ENCODE measurements at regions of chr3 and their contacts with region 1.

Region 1: GRCh38 chr3:9731206-9732079 is at the start of gene BRPF1:
- DNase-seq: peak; percentile 100
- ATAC-seq: peak; percentile 97
- H3K4me3 Mint-ChIP-seq: peak within 1 kb of the TSS; percentile 97
- H3K27ac Mint-ChIP-seq: peak within 1 kb of the TSS; percentile 96
- H3K4me1 Mint-ChIP-seq: peaks cover 68% of the 10 kb centered on the region
- H3K27me3 Mint-ChIP-seq: no peaks in the 10 kb centered on the region
- CTCF ChIP-seq: no peak
- total RNA-seq, gene BRPF1: 28.2 to 32.3 TPM

Region 2: GRCh38 chr3:9649791-9650521 is 81.5 kb before region 1 on chr3:
- CTCF ChIA-PET with region 1: interaction called, 10 read pairs
- POLR2A ChIA-PET with region 1: no interaction called
- intact Hi-C with region 1: no loop called
- DNase-seq: no peak
- ATAC-seq: no peak
- H3K4me3 Mint-ChIP-seq: peak overlapping the region; percentile 87
- H3K27ac Mint-ChIP-seq: peak overlapping the region; percentile 94
- H3K4me1 Mint-ChIP-seq: peaks cover 26% of the 10 kb centered on the region
- H3K27me3 Mint-ChIP-seq: no peaks in the 10 kb centered on the region
- CTCF ChIP-seq: no peak

Region 3: DNA sequence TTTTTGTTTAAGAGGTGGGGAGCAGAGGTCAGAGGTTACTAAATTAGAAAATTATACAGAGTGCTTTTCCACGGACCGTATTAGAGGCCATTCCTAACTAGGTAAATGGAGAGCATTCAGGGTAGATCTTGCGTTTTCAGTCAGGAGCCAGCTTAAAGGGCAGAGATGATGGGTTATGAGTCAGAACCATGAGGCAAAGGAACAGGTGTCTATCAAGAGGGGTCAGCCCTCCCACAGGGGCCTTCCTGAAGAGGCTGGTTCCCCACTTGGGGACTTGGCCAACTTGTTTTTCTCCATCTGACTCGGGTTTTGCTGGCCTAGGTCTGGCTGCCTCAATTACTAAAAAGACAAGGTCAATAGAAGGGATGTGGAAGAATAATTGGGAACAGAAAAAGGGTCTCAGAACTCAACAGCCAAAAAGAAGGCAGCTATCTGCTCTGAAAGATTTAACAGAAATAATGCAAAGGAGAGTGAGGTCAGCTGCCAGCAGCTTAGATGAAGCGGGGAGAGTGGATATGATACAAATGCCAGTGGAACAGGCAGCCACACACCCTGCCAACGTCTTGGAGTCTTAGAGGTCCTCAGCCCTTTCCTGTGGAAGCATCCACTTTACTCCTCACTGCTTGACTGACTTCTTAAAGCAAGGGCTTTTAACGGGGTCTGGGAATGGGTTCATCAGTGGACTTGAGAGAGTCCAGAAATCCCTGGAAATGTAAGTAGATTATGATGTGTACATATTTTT is 64.6 kb before region 1 on chr3:
- CTCF ChIA-PET with region 1: no interaction called
- POLR2A ChIA-PET with region 1: no interaction called
- intact Hi-C with region 1: no loop called
- DNase-seq: peak; percentile 12
- ATAC-seq: peak; percentile 60
- H3K4me3 Mint-ChIP-seq: no peak overlapping the region
- H3K27ac Mint-ChIP-seq: no peak overlapping the region
- H3K4me1 Mint-ChIP-seq: peaks cover 4% of the 10 kb centered on the region
- H3K27me3 Mint-ChIP-seq: no peaks in the 10 kb centered on the region
- CTCF ChIP-seq: no peak

Region 4: GRCh38 chr3:9743548-9743947 is 12.1 kb after region 1 on chr3:
- CTCF ChIA-PET with region 1: interaction called, 35 read pairs
- POLR2A ChIA-PET with region 1: interaction called, 50 read pairs
- intact Hi-C with region 1: no loop called
- DNase-seq: no peak
- ATAC-seq: no peak
- H3K4me3 Mint-ChIP-seq: no peak overlapping the region
- H3K27ac Mint-ChIP-seq: no peak overlapping the region
- H3K4me1 Mint-ChIP-seq: peaks cover 13% of the 10 kb centered on the region
- H3K27me3 Mint-ChIP-seq: no peaks in the 10 kb centered on the region
- CTCF ChIP-seq: no peak

Region 5: DNA sequence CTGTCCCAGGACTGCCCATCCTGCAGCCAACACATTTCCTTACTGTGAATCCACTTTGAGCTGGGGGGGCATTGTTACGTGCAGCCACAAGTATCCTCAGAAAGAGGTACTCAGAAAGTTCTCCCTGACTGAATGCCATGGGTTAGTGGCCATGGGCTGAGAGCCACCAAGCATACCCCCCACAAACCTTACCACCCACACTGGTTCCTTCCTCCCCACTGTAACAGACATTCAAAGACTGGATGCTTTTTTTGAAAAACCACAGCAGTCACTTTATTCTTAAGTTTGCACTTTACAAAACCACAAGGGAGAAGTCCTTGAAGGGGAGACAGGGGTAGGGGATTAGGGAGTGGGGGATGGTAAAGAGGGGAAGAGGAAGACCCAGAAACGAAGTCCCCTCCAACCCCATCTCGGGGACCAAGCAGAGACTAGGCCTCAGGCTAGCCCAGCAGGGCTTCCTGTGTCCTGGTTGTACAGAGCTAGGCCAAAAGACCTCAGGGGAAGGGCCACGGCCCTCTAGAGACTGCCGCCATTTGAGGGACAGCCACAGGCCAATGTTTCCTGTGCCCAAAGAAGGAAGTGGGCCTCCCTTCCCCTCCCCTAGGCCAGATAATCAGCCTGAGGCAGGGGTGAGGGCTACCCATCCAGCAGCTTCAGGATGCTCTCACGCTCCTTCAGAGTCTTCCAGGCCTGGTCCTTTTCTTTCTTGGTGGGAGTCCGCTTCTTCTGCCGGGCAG is 48.4 kb after region 1 on chr3:
- CTCF ChIA-PET with region 1: interaction called, 18 read pairs
- POLR2A ChIA-PET with region 1: interaction called, 8 read pairs
- intact Hi-C with region 1: no loop called
- DNase-seq: peak; percentile 79
- ATAC-seq: peak; percentile 57
- H3K4me3 Mint-ChIP-seq: peak overlapping the region; percentile 22
- H3K27ac Mint-ChIP-seq: peak overlapping the region; percentile 97
- H3K4me1 Mint-ChIP-seq: peaks cover 64% of the 10 kb centered on the region
- H3K27me3 Mint-ChIP-seq: no peaks in the 10 kb centered on the region
- CTCF ChIP-seq: no peak

Region 6: GRCh38 chr3:9809615-9810432 is 78.4 kb after region 1 on chr3 and contains the start of gene TTLL3:
- CTCF ChIA-PET with region 1: interaction called, 12 read pairs
- POLR2A ChIA-PET with region 1: interaction called, 4 read pairs
- intact Hi-C with region 1: no loop called
- DNase-seq: peak; percentile 40
- ATAC-seq: peak; percentile 28
- H3K4me3 Mint-ChIP-seq: peak within 1 kb of the TSS; percentile 75
- H3K27ac Mint-ChIP-seq: peak within 1 kb of the TSS; percentile 90
- H3K4me1 Mint-ChIP-seq: peaks cover 42% of the 10 kb centered on the region
- H3K27me3 Mint-ChIP-seq: no peaks in the 10 kb centered on the region
- CTCF ChIP-seq: no peak
- total RNA-seq, gene TTLL3: 52.4 to 61.1 TPM